ENCODE measurements at regions of chr14 and their contacts with region 1.

Region 1: GRCh38 chr14:70714055-70714621 is 72.4 kb downstream of the TTC9 start:
- DNase-seq: peak; percentile 36
- H3K4me3 Mint-ChIP-seq: no peak overlapping the region
- H3K27ac Mint-ChIP-seq: no peak overlapping the region
- H3K4me1 Mint-ChIP-seq: peaks cover 3% of the 10 kb centered on the region
- H3K27me3 Mint-ChIP-seq: peaks cover 7% of the 10 kb centered on the region

Region 2: GRCh38 chr14:70622111-70622712 is 91.9 kb before region 1 on chr14:
- CTCF ChIA-PET with region 1: interaction called, 19 read pairs
- POLR2A ChIA-PET with region 1: no interaction called
- DNase-seq: peak; percentile 52
- H3K4me3 Mint-ChIP-seq: no peak overlapping the region
- H3K27ac Mint-ChIP-seq: no peak overlapping the region
- H3K4me1 Mint-ChIP-seq: no peaks in the 10 kb centered on the region
- H3K27me3 Mint-ChIP-seq: peaks cover 11% of the 10 kb centered on the region